Dorsolateral prefrontal cortex (tissue), 120 donors: ENCODE measurements at regions of chr22 and their contacts with region 1.

Region 1: DNA sequence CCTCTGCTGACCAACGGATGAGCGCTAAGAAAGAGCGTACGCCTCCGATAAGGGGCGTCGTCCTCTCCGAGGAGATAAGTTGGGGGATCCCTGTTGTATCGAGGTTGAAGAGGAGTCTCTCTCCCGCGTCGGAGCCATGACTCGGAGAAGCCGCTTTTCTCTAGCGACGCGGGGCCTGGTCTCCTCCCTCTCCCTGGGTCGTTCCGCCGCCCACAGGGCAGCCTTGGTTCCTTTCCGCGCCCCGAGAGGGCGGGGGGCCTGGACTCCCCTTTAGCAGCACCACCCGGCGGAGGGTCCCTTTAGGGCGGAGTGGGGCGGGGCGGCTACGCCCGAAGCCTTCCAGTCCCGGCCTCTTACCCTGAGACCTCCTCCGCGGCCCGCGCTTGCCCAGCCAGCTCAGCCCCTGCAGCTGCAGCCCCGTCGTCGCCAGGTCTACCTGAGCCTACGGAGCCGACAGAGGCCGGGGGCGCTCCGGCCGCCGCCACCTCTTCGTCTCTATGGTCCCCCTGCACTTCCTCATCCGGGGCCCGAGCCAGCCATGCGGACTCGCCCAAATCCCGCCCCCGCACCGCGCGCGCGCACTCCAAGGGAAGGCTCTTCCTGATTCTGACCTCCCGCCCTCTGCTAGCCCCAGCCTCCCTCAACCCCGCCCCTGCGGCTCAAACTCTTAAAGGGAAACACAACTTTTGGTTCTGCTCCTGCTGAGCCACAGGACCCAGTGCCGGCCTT is at the start of gene PRR14L:
- DNase-seq: peak; percentile 96 to 100 (median 98)
- H3K4me3 ChIP-seq: peak within 1 kb of the TSS; percentile 66 to 100 (median 98)
- H3K27ac ChIP-seq: peak within 1 kb of the TSS; percentile 4 to 96 (median 84)
- H3K27me3 ChIP-seq: no peaks in the 10 kb centered on the region
- CTCF ChIP-seq: peak in 53 of 56 donors; percentile 9 to 70 (median 44)
- total RNA-seq, gene PRR14L: 40.6 to 84.1 (median 61.9) TPM

Region 2: GRCh38 chr22:31496007-31496734 is 253.6 kb before region 1 on chr22 and contains the start of gene SFI1:
- intact Hi-C with region 1: loop called in 1 of 2 experiments (anchors 10 kb)
- DNase-seq: peak; percentile 89 to 96 (median 94)
- H3K4me3 ChIP-seq: peak within 1 kb of the TSS; percentile 57 to 98 (median 91)
- H3K27ac ChIP-seq: peak within 1 kb of the TSS; percentile 44 to 94 (median 85)
- H3K27me3 ChIP-seq: no peaks in the 10 kb centered on the region
- CTCF ChIP-seq: peak in 53 of 56 donors; percentile 28 to 77 (median 50)
- total RNA-seq, gene SFI1: 34.7 to 122 (median 64.4) TPM

Region 3: DNA sequence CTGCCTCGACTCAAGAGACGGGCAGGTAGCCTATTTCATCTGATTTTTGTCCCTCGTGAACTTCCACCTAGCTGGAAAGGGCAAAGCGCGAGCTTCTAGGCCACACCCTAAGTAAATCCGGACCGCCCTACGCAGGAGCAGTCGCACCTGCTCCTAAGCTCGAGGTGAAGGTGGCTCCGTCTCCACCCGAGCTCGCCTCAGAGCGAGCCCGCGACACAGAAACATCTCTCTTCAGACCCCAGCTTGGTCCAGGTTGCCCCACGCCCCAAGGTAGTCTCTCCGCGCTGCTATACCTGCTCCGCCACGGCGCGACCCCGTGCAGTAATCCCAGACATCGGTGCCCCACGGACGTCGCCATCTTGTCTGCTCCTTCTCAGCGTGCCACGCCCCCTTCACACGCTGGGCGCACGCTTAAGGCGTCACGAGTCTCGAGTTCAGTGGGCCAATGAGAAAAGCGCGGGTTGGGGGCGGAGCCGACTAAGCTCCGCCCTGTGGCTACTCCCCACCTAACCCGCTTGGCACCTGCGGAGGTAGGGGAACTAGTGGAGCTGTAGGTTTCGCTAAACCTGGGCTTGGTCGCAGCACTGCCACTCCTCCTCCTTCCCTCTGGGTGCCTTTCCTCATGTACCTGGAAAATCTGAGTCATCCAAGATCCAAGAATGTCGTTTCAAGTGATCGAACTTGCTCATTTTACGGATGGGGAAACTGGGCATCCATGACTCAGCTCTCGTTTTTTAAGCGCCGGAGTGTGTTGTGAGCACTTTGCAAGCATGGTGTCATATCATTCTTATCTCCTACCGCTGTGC is 87.7 kb before region 1 on chr22 and contains the start of gene PISD:
- intact Hi-C with region 1: loop called (anchors 2 to 5 kb)
- DNase-seq: peak; percentile 88 to 95 (median 94)
- H3K4me3 ChIP-seq: peak within 1 kb of the TSS; percentile 58 to 100 (median 93)
- H3K27ac ChIP-seq: peak within 1 kb of the TSS in 53 of 59 donors; percentile 0 to 92 (median 70)
- H3K27me3 ChIP-seq: no peaks in the 10 kb centered on the region
- CTCF ChIP-seq: peak in 25 of 56 donors; percentile 7 to 47 (median 22)
- total RNA-seq, gene PISD: 48.4 to 108 (median 75.5) TPM

Region 4: GRCh38 chr22:31790240-31790639 is 40.4 kb after region 1 on chr22:
- intact Hi-C with region 1: no loop called
- DNase-seq: no peak
- H3K4me3 ChIP-seq: no peak overlapping the region
- H3K27ac ChIP-seq: no peak overlapping the region
- H3K27me3 ChIP-seq: no peaks in the 10 kb centered on the region
- CTCF ChIP-seq: no peak

Region 5: DNA sequence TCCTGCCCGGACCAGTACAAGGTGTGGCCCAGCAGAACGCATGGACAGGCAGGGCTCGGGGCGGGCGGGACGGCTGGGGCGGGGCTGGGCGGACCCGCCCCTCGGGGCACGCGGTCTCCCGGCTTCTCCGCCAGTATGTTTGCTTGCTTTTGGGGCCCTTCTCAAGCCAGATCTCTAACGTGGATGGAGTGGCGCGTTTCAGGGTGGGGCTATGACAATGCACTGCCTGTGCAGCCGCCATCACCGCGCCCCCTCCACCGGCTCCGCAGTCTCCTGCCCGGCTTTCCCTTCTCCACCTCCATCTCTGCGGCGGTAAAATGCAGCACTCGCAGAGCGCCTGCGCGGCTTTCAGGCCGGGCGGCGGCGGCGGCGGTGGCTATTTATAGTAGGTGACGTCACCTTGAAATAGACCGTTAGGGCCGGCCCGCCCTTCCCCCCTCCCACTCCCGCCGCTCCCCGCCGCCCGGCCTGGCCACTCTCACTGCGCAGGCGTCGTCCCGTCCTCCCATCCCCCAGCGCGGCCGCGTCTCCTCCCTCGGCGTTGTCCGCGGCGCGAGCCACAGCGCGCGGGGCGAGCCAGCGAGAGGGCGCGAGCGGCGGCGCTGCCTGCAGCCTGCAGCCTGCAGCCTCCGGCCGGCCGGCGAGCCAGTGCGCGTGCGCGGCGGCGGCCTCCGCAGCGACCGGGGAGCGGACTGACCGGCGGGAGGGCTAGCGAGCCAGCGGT is 194.3 kb after region 1 on chr22 and contains the start of gene YWHAH:
- intact Hi-C with region 1: loop called (anchors 5 kb)
- DNase-seq: peak; percentile 88 to 97 (median 94)
- H3K4me3 ChIP-seq: peak within 1 kb of the TSS; percentile 56 to 99 (median 91)
- H3K27ac ChIP-seq: peak within 1 kb of the TSS; percentile 92 to 100 (median 99)
- H3K27me3 ChIP-seq: no peaks in the 10 kb centered on the region
- CTCF ChIP-seq: peak in 22 of 56 donors; percentile 8 to 49 (median 23)
- total RNA-seq, gene YWHAH: 191 to 1,478 (median 946) TPM